Activated naive CD4-positive, alpha-beta T cell treated with anti-CD3 and anti-CD28 coated beads, Interleukin-2, amount 10 ng/mL, durations not matched to agents 7 days and 5 days (primary cell): ENCODE measurements at regions of chr2 and their contacts with region 1.

Region 1: DNA sequence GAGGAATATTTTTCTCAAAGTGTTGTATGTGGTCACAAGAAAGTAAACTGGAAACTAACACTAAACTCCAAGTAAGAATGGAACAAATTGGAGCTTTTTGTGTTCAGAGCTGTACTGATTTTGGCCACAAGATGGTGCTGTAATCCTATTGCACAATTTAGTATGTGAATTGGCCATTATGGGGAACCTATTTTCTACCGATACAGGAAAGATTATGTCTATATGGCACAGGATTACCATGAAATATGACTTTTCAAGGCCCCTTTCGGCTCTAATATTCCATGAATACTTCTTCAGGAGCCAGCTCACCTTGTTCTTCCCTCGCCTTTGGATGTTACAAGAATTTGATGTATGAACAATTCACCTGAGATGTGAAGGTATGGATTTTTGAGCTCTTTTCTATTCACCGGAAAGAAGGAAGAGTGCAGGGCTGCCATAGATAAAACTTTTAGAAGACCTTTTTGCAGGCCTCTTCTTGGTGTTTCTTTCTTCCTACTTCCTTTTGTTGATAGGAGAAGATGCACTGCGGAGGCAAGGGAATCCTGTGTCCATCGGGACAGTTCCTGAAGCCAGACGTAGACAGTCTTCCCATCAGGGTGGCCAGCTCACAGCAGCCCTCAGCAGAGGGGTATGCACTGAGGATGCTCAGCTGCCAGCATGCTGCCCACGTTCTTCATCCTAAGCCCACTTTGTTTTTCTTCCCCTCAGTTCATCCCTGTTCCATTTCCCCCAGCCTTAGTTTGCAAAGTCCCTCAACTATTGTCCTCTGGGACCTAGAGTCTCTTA is 13.3 kb downstream of the MRPL44 start:
- DNase-seq: peak; percentile 66
- H3K4me3 Mint-ChIP-seq: no peak overlapping the region
- H3K27ac Mint-ChIP-seq: no peak overlapping the region
- H3K4me1 Mint-ChIP-seq: peaks cover 2% of the 10 kb centered on the region
- H3K27me3 Mint-ChIP-seq: no peaks in the 10 kb centered on the region

Region 2: DNA sequence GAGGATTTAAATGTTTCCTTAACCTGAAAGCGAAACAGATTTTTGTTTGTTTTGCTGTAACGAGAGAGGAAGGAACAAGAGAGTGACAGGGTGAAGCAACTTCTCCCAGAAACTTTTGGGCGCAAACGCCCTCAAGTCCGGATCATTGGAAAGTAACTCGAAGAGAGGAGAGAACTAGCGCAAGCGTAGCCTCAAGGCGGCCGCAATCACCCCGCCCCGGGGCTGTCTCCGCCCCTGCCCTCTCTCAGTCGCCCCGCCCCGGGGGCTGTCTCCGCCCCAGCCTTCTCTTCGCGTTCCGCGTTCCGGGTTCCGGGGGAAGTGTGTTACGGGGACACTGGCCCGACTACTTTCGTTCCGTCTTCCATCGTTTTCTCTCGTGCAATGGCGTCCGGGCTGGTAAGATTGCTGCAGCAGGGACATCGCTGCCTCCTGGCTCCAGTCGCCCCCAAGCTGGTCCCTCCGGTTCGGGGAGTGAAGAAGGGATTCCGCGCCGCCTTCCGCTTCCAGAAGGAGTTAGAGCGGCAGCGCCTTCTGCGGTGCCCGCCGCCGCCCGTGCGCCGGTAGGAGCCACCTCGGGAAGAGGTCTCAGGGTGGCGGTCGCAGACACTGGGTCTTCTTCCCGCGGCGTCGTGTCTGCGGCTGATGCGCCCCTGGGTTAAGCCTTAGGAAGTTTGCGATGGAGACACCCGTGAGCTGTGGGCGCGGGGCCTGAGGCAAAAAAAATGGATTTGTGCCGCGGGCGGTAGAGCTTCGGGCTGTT is 13.3 kb before region 1 on chr2 and contains the start of gene MRPL44:
- CTCF ChIA-PET with region 1: interaction called, 28 read pairs
- DNase-seq: peak; percentile 96
- H3K4me3 Mint-ChIP-seq: peak within 1 kb of the TSS; percentile 90
- H3K27ac Mint-ChIP-seq: peak within 1 kb of the TSS; percentile 95
- H3K4me1 Mint-ChIP-seq: peaks cover 71% of the 10 kb centered on the region
- H3K27me3 Mint-ChIP-seq: peaks cover 6% of the 10 kb centered on the region

Region 3: GRCh38 chr2:224062481-224063297 is 92.2 kb after region 1 on chr2:
- CTCF ChIA-PET with region 1: interaction called, 29 read pairs
- DNase-seq: no peak
- H3K4me3 Mint-ChIP-seq: no peak overlapping the region
- H3K27ac Mint-ChIP-seq: no peak overlapping the region
- H3K4me1 Mint-ChIP-seq: no peaks in the 10 kb centered on the region
- H3K27me3 Mint-ChIP-seq: peaks cover 3% of the 10 kb centered on the region

Region 4: DNA sequence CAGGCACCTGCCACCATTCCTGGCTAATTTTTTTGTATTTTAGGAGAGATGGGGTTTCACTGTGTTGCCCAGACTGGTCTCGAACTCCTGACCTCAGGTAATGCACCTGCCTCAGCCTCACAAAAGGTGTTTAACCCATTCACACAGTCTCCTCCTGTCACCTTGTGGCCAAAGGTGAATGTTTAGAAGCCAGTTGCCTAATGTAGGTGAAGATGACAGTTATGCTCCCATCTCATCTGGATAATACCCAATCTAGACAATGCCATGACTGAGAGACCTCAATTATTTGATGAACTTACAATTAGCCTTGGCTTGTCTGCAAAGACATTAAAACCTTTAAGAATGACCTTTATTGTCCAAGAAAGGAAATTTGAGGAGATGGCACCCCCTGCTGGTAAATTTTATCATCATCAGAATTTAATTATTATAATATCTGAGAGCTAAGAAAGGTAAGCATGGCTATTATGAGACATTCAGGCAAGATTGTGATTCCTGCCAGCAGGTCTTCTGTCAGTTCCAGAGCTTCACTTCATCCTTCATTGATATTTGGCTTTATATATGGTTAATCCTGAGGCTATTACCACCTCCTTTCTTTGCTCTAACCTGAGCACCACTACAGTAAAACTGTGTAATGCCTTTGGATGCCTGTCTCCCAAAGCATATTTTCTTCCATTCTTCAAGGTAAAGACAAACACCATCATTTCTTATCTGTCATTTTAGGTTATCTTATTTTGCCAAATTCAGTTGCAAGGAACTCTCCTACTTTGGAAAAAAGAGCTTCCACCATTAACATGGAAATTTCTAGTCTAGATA is 313.8 kb after region 1 on chr2:
- CTCF ChIA-PET with region 1: interaction called, 167 read pairs
- DNase-seq: peak; percentile 23
- H3K4me3 Mint-ChIP-seq: no peak overlapping the region
- H3K27ac Mint-ChIP-seq: no peak overlapping the region
- H3K4me1 Mint-ChIP-seq: no peaks in the 10 kb centered on the region
- H3K27me3 Mint-ChIP-seq: peaks cover 24% of the 10 kb centered on the region